Uterus (tissue), 4 donors: ENCODE measurements at regions of chr19 and their contacts with region 1.

Region 1: DNA sequence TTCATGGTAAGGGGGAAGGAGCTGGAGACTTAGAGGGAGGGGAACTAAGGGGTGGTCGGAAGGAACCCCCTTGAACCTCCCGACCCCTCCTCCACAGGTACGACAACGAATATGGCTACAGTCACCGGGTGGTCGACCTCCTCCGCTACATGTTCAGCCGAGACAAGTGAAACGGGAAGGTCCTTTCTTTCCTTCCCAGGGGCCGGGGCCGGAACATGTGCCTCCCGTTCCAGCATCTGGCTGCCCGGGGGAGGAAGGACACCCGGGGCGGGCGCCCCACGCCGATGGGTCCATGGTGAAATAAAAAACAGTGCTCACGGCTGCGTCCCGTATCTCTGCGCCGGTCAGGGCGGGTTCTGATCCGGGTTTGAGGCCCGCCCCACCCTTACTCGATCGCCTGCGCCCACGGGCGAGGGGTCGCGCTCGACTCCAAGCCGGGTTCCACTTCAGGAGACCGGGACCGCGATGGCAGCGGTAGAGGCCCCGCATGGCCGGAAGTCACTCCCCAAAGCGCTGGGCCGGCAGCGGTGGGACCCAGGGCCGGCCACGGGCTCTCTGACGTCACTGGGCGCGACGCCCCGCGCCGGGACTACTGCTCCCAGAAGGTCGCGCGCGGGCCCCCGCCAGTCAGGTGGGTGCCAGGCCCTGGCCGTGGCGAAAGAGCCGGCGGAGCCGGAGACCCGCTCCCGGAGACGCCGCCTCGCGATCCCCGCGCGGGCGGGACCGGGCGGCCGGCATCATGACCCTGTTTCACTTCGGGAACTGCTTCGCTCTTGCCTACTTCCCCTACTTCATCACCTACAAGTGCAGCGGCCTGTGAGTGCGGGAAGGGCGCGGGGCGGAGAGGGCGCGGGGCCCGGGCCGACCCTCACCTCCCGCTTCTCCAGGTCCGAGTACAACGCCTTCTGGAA is at the start of gene TMEM147:
- DNase-seq: peak; percentile 91 to 93
- H3K4me3 ChIP-seq: peak within 1 kb of the TSS; percentile 66 to 77
- H3K27ac ChIP-seq: peak within 1 kb of the TSS; percentile 62 to 82
- H3K4me1 ChIP-seq: peaks cover 0 to 15% of the 10 kb centered on the region in 2 donors
- H3K27me3 ChIP-seq: no peaks in the 10 kb centered on the region
- CTCF ChIP-seq: peak in 1 of 4 experiments; percentile 37
- POLR2A ChIP-seq: peak; percentile 27 to 62
- total RNA-seq, gene TMEM147: 34.6 to 111 (median 50.0) TPM

Region 2: GRCh38 chr19:35716801-35717666 is 171.8 kb after region 1 on chr19:
- intact Hi-C with region 1: loop called (anchors 10 kb)
- DNase-seq: peak; percentile 87 to 95
- H3K4me3 ChIP-seq: peak overlapping the region; percentile 72 to 85
- H3K27ac ChIP-seq: peak overlapping the region; percentile 90 to 92
- H3K4me1 ChIP-seq: peaks cover 8 to 11% of the 10 kb centered on the region in 2 donors
- H3K27me3 ChIP-seq: no peaks in the 10 kb centered on the region
- CTCF ChIP-seq: peak; percentile 86 to 92 (median 90)
- POLR2A ChIP-seq: peak; percentile 6 to 34